Mammary epithelial cell (primary cell): ENCODE measurements at regions of chr2 and their contacts with region 1.

Region 1: GRCh38 chr2:212892193-212892592 is 259.2 kb downstream of the IKZF2 start:
- DNase-seq: peak; percentile 59
- H3K4me3 ChIP-seq: no peak overlapping the region
- H3K27ac ChIP-seq: no peak overlapping the region
- H3K4me1 ChIP-seq: peaks cover 5% of the 10 kb centered on the region
- H3K27me3 ChIP-seq: no peaks in the 10 kb centered on the region
- CTCF ChIP-seq: peak; percentile 56 to 69

Region 2: GRCh38 chr2:212686285-212686895 is 205.8 kb before region 1 on chr2:
- CTCF ChIA-PET with region 1: interaction called, 5 read pairs
- dilution Hi-C with region 1: no loop called
- in situ Hi-C with region 1: no loop called
- intact Hi-C with region 1: loop called (anchors 1 kb)
- DNase-seq: peak; percentile 50
- H3K4me3 ChIP-seq: no peak overlapping the region
- H3K27ac ChIP-seq: no peak overlapping the region
- H3K4me1 ChIP-seq: no peaks in the 10 kb centered on the region
- H3K27me3 ChIP-seq: no peaks in the 10 kb centered on the region
- CTCF ChIP-seq: peak; percentile 75 to 83

Region 3: GRCh38 chr2:212843409-212844199 is 48.6 kb before region 1 on chr2:
- CTCF ChIA-PET with region 1: no interaction called
- dilution Hi-C with region 1: no loop called
- in situ Hi-C with region 1: no loop called
- intact Hi-C with region 1: loop called (anchors 2 kb)
- DNase-seq: peak; percentile 94
- H3K4me3 ChIP-seq: peak overlapping the region in 1 of 3 experiments; percentile 15
- H3K27ac ChIP-seq: peak overlapping the region; percentile 100
- H3K4me1 ChIP-seq: peaks cover 42% of the 10 kb centered on the region
- H3K27me3 ChIP-seq: no peaks in the 10 kb centered on the region
- CTCF ChIP-seq: no peak

Region 4: DNA sequence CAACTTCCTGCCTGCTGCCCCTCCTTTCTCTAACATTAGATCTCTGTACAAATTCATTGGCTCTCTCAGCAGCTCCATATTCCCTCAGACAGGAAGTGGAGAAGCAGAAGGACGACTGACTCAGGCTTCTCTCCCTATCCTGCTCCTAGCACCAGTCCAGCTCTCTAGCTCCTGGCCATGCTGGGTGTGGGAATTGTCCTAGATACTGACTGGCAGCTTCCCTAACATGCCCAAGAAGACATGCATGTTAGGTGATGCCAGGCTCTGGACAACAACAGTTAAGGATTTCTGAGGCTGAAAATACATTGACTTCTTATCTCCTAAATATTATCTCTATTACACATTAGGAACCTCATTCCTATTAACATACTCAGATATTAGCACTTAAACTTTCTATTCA is 33.7 kb before region 1 on chr2:
- CTCF ChIA-PET with region 1: no interaction called
- dilution Hi-C with region 1: no loop called
- in situ Hi-C with region 1: no loop called
- intact Hi-C with region 1: no loop called
- DNase-seq: peak; percentile 16
- H3K4me3 ChIP-seq: no peak overlapping the region
- H3K27ac ChIP-seq: no peak overlapping the region
- H3K4me1 ChIP-seq: peaks cover 13% of the 10 kb centered on the region
- H3K27me3 ChIP-seq: no peaks in the 10 kb centered on the region
- CTCF ChIP-seq: no peak